ENCODE measurements at regions of chr15 and their contacts with region 1.

Region 1: GRCh38 chr15:55649054-55649423 is 60.9 kb upstream of the PYGO1 start:
- DNase-seq: no peak
- ATAC-seq: no peak
- H3K4me3 ChIP-seq: no peak overlapping the region
- H3K4me3 Mint-ChIP-seq: no peak overlapping the region
- H3K27ac ChIP-seq: no peak overlapping the region
- H3K27ac Mint-ChIP-seq: no peak overlapping the region
- H3K4me1 ChIP-seq: no peaks in the 10 kb centered on the region
- H3K4me1 Mint-ChIP-seq: no peaks in the 10 kb centered on the region
- H3K27me3 ChIP-seq: no peaks in the 10 kb centered on the region
- H3K27me3 Mint-ChIP-seq: peaks cover 2% of the 10 kb centered on the region
- CTCF ChIP-seq: no peak

Region 2: GRCh38 chr15:55846116-55846707 is 197.2 kb after region 1 on chr15:
- CTCF ChIA-PET with region 1: interaction called, 5 read pairs
- POLR2A ChIA-PET with region 1: no interaction called
- intact Hi-C with region 1: loop called in 1 of 2 experiments (anchors 1 kb)
- DNase-seq: peak in 6 of 9 experiments; percentile 2 to 75 (median 32)
- ATAC-seq: peak; percentile 49
- H3K4me3 ChIP-seq: no peak overlapping the region
- H3K4me3 Mint-ChIP-seq: no peak overlapping the region
- H3K27ac ChIP-seq: no peak overlapping the region
- H3K27ac Mint-ChIP-seq: no peak overlapping the region
- H3K4me1 ChIP-seq: no peaks in the 10 kb centered on the region
- H3K4me1 Mint-ChIP-seq: no peaks in the 10 kb centered on the region
- H3K27me3 ChIP-seq: no peaks in the 10 kb centered on the region
- H3K27me3 Mint-ChIP-seq: no peaks in the 10 kb centered on the region
- CTCF ChIP-seq: peak; percentile 95

Region 3: GRCh38 chr15:55917881-55918296 is 268.9 kb after region 1 on chr15:
- CTCF ChIA-PET with region 1: no interaction called
- POLR2A ChIA-PET with region 1: no interaction called
- intact Hi-C with region 1: loop called in 1 of 2 experiments (anchors 5 kb)
- DNase-seq: peak in 2 of 9 experiments; percentile 33 to 40
- ATAC-seq: no peak
- H3K4me3 ChIP-seq: no peak overlapping the region
- H3K4me3 Mint-ChIP-seq: no peak overlapping the region
- H3K27ac ChIP-seq: no peak overlapping the region
- H3K27ac Mint-ChIP-seq: no peak overlapping the region
- H3K4me1 ChIP-seq: no peaks in the 10 kb centered on the region
- H3K4me1 Mint-ChIP-seq: peaks cover 2% of the 10 kb centered on the region
- H3K27me3 ChIP-seq: no peaks in the 10 kb centered on the region
- H3K27me3 Mint-ChIP-seq: no peaks in the 10 kb centered on the region
- CTCF ChIP-seq: peak; percentile 57

Region 4: DNA sequence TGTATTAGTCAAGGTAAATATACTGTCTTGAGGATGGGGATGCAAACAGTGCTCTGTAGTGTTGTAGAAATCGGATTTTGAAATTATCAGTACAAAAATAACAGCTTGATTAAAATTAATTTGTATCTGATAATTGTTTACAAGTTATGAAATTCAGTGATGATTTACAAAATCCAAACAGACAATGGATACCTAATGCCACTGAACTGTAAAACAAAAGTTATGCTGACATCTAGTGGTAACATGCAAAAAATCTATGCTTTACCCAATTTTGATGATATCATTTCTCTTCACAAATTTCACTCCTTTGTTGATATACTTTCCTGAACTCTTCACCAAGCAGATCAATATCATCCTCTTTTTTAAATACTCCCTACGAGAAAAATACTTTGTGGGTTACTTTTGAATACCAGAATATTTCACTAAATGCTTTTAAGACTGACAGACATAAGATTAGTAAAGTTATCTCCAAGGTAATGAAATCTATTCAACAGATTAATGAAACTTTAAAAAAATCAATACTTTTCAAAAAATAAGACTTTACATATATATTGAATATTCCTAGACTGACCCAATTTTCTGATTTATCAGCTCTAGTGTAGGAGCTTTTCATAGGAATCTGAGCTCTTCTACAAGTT is 779.9 kb after region 1 on chr15:
- CTCF ChIA-PET with region 1: no interaction called
- POLR2A ChIA-PET with region 1: no interaction called
- intact Hi-C with region 1: loop called in 1 of 2 experiments (anchors 1 kb)
- DNase-seq: peak in 2 of 9 experiments; percentile 6 to 29
- ATAC-seq: no peak
- H3K4me3 ChIP-seq: no peak overlapping the region
- H3K4me3 Mint-ChIP-seq: no peak overlapping the region
- H3K27ac ChIP-seq: no peak overlapping the region
- H3K27ac Mint-ChIP-seq: no peak overlapping the region
- H3K4me1 ChIP-seq: no peaks in the 10 kb centered on the region
- H3K4me1 Mint-ChIP-seq: no peaks in the 10 kb centered on the region
- H3K27me3 ChIP-seq: peaks cover 0 to 2% of the 10 kb centered on the region in 2 experiments
- H3K27me3 Mint-ChIP-seq: peaks cover 6% of the 10 kb centered on the region
- CTCF ChIP-seq: peak; percentile 31

Measured in CD8-positive, alpha-beta T cell (primary cell).